ENCODE measurements at regions of chr10 and their contacts with region 1.

Region 1: GRCh38 chr10:11515596-11516430 is 95.6 kb downstream of the USP6NL start:
- DNase-seq: peak; percentile 73
- H3K4me3 ChIP-seq: no peak overlapping the region
- H3K27ac ChIP-seq: no peak overlapping the region
- H3K4me1 ChIP-seq: peaks cover 12% of the 10 kb centered on the region
- H3K27me3 ChIP-seq: no peaks in the 10 kb centered on the region
- CTCF ChIP-seq: peak; percentile 66 to 79 (median 77)
- POLR2A ChIP-seq: no peak

Region 2: DNA sequence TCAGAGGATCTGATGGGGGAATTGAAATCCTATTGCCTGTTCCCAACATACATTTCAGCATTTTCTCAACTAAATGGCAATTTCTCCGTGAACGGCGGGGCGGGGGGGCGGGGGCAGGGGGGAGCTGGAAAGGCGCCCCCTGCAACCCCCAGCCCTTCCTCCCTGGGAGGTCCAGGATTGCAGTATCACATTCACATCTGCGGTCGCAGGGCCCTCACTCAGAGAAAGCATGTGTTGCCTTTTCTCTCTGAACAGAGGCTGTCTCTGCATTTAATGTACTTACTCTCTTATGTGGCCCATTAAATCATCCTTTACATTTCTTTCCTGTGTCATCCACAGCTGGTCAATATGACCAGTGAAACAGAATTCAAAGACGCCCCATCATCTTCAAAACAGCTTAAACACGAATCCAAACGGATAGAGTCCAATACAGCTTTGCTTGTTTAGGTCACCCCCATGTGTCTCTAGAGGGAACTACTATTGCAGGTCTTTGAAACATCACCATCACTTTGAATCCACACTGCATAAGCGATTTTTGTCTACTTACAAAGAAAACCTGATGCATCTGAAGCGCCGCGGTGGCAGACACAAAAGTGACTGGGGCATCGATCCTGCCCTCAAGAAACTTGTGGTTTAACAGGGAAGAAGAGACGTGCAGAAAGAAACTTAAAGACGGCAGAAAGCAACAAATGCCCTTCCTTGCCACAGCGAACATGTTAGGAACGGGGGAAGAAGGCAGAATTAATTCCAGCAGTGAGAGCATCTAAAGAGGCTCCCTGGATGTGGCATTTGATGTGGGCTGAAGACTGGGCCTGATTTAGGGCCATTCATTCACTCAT is 209.3 kb after region 1 on chr10:
- intact Hi-C with region 1: loop called (anchors 10 kb)
- DNase-seq: no peak
- H3K4me3 ChIP-seq: no peak overlapping the region
- H3K27ac ChIP-seq: no peak overlapping the region
- H3K4me1 ChIP-seq: no peaks in the 10 kb centered on the region
- H3K27me3 ChIP-seq: no peaks in the 10 kb centered on the region
- CTCF ChIP-seq: peak; percentile 48 to 77 (median 62)
- POLR2A ChIP-seq: no peak

Region 3: GRCh38 chr10:11757821-11758463 is 242.1 kb after region 1 on chr10:
- intact Hi-C with region 1: loop called (anchors 10 kb)
- DNase-seq: peak; percentile 91
- H3K4me3 ChIP-seq: no peak overlapping the region
- H3K27ac ChIP-seq: peak overlapping the region; percentile 21 to 79
- H3K4me1 ChIP-seq: peaks cover 24% of the 10 kb centered on the region
- H3K27me3 ChIP-seq: no peaks in the 10 kb centered on the region
- CTCF ChIP-seq: peak; percentile 67 to 79 (median 74)
- POLR2A ChIP-seq: no peak

Measured in testis (tissue), 5 donors.